ENCODE measurements at regions of chr5 and their contacts with region 1.

Region 1: DNA sequence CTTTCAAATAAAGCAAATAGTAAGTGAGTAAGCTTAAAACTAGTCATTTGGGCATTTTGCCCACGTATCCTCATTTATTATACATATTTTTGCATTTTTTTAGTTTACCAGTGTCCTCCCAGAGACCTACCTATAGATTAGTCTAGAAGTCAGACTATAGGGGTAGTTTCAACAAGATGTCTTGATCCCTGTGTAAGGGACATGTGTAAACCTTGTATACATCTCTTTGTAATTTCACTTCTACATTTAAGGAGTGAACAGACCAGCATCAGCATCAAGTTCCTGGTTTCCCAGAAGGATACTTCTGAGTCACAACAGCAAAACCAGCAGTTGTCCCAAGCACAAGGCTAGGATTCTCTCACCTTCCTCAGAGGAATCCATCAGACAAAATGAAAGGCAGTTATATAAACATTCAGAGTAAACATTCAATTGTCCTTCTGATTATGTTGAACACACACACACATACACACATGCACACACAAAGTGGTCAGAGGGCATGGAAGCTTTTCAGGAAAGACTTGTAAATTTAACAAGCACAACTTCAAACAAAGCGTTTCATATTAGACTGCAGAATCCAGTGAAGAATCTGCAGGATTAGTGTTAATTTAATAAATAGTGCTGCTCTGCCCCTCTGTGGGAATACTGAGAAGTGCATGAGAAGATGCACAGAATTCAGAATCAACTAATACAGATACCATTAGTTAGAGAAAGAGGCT is 55.4 kb downstream of the HINT1 start:
- H3K4me3 Mint-ChIP-seq: no peak overlapping the region
- H3K27ac Mint-ChIP-seq: no peak overlapping the region
- H3K4me1 Mint-ChIP-seq: peaks cover 19% of the 10 kb centered on the region
- H3K27me3 Mint-ChIP-seq: no peaks in the 10 kb centered on the region

Region 2: GRCh38 chr5:129773376-129773775 is 1336.3 kb before region 1 on chr5:
- intact Hi-C with region 1: loop called (anchors 2 kb)
- H3K4me3 Mint-ChIP-seq: no peak overlapping the region
- H3K27ac Mint-ChIP-seq: no peak overlapping the region
- H3K4me1 Mint-ChIP-seq: no peaks in the 10 kb centered on the region
- H3K27me3 Mint-ChIP-seq: no peaks in the 10 kb centered on the region

Region 3: DNA sequence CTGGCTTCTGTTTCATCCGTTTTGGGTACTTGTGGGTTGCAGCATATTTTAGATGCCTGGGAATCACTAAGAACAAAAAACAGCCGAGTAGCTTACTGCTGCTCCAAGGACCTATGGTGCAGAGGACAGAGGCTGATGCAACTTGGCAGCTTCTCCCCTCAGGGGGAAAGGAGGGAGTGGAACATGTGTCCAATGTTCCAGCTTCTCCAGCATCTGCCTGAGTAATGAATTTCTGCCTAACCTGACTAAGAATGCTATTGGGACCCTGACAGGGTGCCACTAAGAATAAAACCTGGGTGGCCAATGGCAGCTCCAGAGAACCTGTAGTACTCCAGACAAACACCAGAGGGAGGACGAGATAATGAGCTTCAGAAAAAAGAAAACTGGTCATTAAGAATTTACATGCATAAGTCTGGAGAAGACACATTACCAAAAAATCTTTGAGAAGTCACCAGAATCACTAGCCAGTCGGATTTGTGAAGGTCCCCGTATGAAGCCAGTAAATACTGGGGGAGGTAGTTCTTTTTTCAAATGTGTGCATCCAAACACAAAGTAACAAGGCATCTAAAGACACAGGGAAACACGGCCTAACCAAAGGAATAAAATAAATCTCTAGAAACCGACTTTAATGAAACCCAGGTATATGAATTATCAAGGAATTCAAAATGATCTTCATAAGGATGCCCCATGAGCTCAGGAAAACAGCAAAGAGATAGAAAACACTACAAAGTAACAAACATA is 238.2 kb before region 1 on chr5:
- intact Hi-C with region 1: loop called (anchors 1 kb)
- H3K4me3 Mint-ChIP-seq: no peak overlapping the region
- H3K27ac Mint-ChIP-seq: no peak overlapping the region
- H3K4me1 Mint-ChIP-seq: no peaks in the 10 kb centered on the region
- H3K27me3 Mint-ChIP-seq: no peaks in the 10 kb centered on the region

Region 4: DNA sequence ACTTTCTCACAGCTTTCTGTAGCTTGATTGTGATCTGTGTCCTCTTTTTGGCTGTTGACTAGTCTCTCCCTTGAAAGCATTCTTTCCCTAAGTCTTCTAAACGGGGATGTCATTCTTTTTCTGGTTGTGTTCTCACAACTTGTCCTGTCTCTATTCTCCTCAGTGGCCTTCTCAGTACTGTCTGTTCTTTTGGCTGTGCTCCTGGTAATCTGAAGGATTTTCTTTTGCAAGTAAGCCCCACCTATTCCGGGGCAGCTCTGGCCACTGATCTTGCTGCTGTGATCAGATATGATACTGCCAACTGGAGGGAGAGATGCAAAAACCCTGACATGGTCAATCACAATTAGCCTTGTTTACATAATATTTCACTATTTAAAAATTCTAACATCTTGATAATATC is 326.4 kb after region 1 on chr5:
- intact Hi-C with region 1: no loop called
- H3K4me3 Mint-ChIP-seq: no peak overlapping the region
- H3K27ac Mint-ChIP-seq: no peak overlapping the region
- H3K4me1 Mint-ChIP-seq: peaks cover 5% of the 10 kb centered on the region
- H3K27me3 Mint-ChIP-seq: no peaks in the 10 kb centered on the region

Measured in dendritic cell treated with granulocyte-macrophage colony-stimulating factor and Interleukin-4, amounts not matched to agents 40 ng/mL and 50 ng/mL, for 4 days (primary cell).